CD8-positive, alpha-beta T cell (primary cell): ENCODE measurements at regions of chr19 and their contacts with region 1.

Region 1: DNA sequence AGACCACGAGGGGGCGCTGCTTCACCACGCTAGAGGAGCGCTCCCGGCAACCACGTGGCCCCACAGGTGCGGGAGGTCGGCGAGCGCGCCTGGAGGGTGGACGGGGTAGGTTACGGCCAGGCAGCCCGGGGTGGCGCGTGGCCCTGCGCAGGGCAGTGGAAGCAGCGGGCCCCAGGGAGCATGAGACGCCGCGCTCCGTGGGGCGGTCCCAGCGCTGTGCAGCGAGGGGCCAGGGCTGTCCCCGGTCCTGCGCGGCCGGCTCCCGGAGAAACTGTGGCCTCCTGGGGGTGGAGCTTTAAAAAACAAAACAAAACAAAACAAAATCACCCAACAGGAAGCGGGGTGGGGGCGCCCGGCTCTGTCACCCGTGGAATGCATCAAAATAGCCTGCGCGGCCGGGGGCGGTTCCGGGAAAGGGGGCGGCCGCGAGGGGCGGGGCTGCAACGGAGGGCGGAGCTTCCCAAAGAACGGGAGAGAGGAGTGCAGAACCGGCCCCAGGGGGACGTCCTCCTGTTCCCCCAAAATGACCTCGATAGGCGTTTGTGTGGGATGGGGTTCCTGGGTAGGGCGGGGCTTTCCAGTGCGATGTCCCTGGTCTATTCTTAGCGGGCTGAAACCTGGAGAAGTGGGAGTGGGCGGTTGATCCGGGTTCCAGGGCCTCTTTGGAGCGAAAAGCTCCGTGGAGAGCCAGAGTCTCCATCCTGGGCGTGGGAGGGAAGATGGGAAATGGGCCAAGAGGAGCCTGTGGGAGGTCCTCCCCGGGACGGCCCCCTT is 27.3 kb downstream of the NUMBL start:
- DNase-seq: peak; percentile 86 to 98 (median 94)
- ATAC-seq: peak; percentile 82
- H3K4me3 ChIP-seq: peak overlapping the region; percentile 66 to 67
- H3K4me3 Mint-ChIP-seq: peak overlapping the region; percentile 87
- H3K27ac ChIP-seq: peak overlapping the region; percentile 49 to 70
- H3K27ac Mint-ChIP-seq: peak overlapping the region; percentile 80
- H3K4me1 ChIP-seq: peaks cover 11% of the 10 kb centered on the region
- H3K4me1 Mint-ChIP-seq: peaks cover 8% of the 10 kb centered on the region
- H3K27me3 ChIP-seq: no peaks in the 10 kb centered on the region
- H3K27me3 Mint-ChIP-seq: no peaks in the 10 kb centered on the region
- CTCF ChIP-seq: peak; percentile 95

Region 2: GRCh38 chr19:40690693-40691420 is 27.7 kb after region 1 on chr19:
- CTCF ChIA-PET with region 1: interaction called, 3 read pairs
- POLR2A ChIA-PET with region 1: interaction called, 3 read pairs
- intact Hi-C with region 1: loop called (anchors 1 to 2 kb)
- DNase-seq: peak; percentile 67 to 93 (median 85)
- ATAC-seq: peak; percentile 88
- H3K4me3 ChIP-seq: peak overlapping the region; percentile 65 to 76
- H3K4me3 Mint-ChIP-seq: peak overlapping the region; percentile 88
- H3K27ac ChIP-seq: peak overlapping the region in 1 of 2 experiments; percentile 40
- H3K27ac Mint-ChIP-seq: peak overlapping the region; percentile 75
- H3K4me1 ChIP-seq: peaks cover 23% of the 10 kb centered on the region
- H3K4me1 Mint-ChIP-seq: peaks cover 7% of the 10 kb centered on the region
- H3K27me3 ChIP-seq: peaks cover 0 to 3% of the 10 kb centered on the region in 2 experiments
- H3K27me3 Mint-ChIP-seq: no peaks in the 10 kb centered on the region
- CTCF ChIP-seq: no peak

Region 3: DNA sequence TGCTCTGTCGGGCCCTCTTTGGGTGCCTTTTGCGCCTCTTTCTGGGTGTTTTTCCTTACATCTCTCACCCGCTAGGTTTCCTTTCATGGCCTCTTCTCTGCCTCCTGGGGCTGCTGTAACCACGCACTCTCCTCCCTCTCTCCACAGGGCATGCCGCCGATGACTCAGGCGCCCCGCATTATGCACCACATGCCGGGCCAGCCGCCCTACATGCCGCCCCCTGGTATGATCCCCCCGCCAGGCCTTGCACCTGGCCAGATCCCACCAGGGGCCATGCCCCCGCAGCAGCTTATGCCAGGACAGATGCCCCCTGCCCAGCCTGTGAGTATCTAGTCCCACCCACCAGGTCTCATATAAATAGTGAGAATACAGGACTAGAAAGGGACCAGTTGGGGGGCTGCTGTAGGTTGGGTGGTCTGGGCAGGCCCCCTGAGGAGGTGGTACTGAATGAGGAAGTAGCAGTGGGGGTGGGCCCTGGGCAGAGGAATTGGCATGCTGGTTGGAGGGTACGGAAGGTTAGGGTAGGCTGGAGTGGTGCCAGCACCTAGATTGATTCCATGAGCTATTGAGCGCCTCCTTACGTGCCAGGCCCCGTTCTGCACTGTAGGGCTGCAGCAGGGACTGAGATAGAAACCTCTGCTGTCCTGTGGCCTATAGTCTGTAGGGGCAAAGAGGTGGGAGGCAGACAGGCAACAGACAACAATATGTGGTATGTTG is 99.8 kb after region 1 on chr19:
- CTCF ChIA-PET with region 1: no interaction called
- POLR2A ChIA-PET with region 1: interaction called, 3 read pairs
- intact Hi-C with region 1: loop called in 1 of 2 experiments (anchors 5 kb)
- DNase-seq: peak in 3 of 9 experiments; percentile 24 to 51 (median 37)
- ATAC-seq: peak; percentile 61
- H3K4me3 ChIP-seq: no peak overlapping the region
- H3K4me3 Mint-ChIP-seq: peak overlapping the region; percentile 11
- H3K27ac ChIP-seq: peak overlapping the region; percentile 1 to 55
- H3K27ac Mint-ChIP-seq: peak overlapping the region; percentile 91
- H3K4me1 ChIP-seq: peaks cover 41% of the 10 kb centered on the region
- H3K4me1 Mint-ChIP-seq: peaks cover 58% of the 10 kb centered on the region
- H3K27me3 ChIP-seq: no peaks in the 10 kb centered on the region
- H3K27me3 Mint-ChIP-seq: no peaks in the 10 kb centered on the region
- CTCF ChIP-seq: no peak

Region 4: GRCh38 chr19:40813182-40813958 is 150.3 kb after region 1 on chr19:
- CTCF ChIA-PET with region 1: interaction called, 43 read pairs
- POLR2A ChIA-PET with region 1: interaction called, 3 read pairs
- intact Hi-C with region 1: no loop called
- DNase-seq: no peak
- ATAC-seq: no peak
- H3K4me3 ChIP-seq: no peak overlapping the region
- H3K4me3 Mint-ChIP-seq: no peak overlapping the region
- H3K27ac ChIP-seq: no peak overlapping the region
- H3K27ac Mint-ChIP-seq: peak overlapping the region; percentile 49
- H3K4me1 ChIP-seq: peaks cover 35% of the 10 kb centered on the region
- H3K4me1 Mint-ChIP-seq: peaks cover 38% of the 10 kb centered on the region
- H3K27me3 ChIP-seq: no peaks in the 10 kb centered on the region
- H3K27me3 Mint-ChIP-seq: no peaks in the 10 kb centered on the region
- CTCF ChIP-seq: no peak

Region 5: DNA sequence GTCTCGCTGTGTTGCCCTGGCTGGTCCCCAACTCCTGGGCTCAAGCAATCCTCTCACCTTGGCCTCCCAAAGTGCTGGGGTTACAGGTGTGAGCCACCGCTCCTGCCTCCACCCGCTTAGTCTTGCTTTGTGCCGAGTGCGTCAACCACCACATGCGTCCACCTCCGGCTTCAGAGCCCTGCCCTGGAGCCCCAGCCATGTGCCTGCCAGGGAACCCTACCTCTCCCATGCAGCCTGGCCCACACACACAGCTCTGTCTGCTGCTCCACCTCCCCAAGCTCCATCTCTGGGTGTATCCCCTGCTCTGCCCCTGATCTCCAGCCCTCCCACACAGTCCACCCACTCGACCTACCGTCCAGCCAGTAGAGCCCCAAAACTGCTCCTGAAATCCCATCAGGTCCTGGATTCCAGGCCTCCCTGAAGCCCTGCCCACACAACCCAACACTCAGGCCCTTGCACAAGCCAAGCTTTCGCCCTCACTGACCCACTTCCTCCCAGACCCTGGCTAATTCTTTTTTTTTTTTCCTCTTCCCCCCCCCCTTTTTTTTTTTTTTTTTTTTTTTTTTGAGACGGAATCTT is 460.7 kb after region 1 on chr19:
- CTCF ChIA-PET with region 1: interaction called, 3 read pairs
- POLR2A ChIA-PET with region 1: no interaction called
- intact Hi-C with region 1: loop called in 1 of 2 experiments (anchors 2 kb)
- DNase-seq: peak in 1 of 9 experiments; percentile 20
- ATAC-seq: no peak
- H3K4me3 ChIP-seq: no peak overlapping the region
- H3K4me3 Mint-ChIP-seq: no peak overlapping the region
- H3K27ac ChIP-seq: no peak overlapping the region
- H3K27ac Mint-ChIP-seq: peak overlapping the region; percentile 41
- H3K4me1 ChIP-seq: peaks cover 23% of the 10 kb centered on the region
- H3K4me1 Mint-ChIP-seq: peaks cover 44% of the 10 kb centered on the region
- H3K27me3 ChIP-seq: no peaks in the 10 kb centered on the region
- H3K27me3 Mint-ChIP-seq: no peaks in the 10 kb centered on the region
- CTCF ChIP-seq: no peak

Region 6: DNA sequence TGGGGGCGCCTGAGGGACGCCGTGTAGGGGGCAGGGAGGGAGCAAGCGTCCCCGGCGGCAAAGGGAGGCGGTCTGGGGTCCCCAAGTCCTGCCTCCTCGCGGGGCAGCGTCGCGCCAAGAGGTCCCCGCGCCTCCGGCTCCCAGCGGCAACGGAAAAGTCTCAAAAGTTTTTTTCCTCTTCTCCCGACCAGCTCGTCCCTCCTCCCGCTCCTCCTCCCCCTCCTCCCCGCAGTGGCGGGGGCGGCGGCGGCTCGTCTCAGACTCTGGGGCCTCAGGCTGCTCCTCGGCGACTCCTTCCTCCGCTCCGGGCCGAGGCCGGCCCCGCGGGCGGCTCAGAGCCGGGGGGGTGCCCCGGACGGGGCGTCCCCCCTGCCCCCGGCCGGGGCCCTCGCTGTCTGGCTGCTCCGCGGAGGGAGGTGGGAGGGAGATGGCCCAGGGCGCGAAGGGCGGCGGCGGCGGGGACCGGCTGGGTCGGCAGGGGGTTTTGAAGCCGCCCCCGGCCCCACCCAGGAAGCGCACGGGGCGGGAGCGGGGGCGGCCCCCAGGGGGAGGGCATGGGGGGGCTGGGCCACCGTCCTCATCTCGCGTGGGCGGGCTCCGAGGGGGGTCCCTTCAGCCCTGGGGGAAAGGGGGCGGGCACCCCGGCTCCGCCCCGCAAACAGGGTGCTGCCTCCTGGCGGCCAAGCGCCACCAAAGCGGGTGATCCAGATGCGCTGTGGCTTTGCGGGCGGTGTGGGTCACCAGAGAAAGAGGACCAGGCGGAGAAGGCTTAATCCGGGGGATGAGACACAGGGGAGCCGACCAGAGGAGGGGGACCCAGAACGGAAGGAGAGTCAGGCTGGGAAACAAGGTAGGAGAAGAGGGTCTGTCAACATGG is 690.6 kb after region 1 on chr19 and contains the start of gene TGFB1:
- CTCF ChIA-PET with region 1: no interaction called
- POLR2A ChIA-PET with region 1: no interaction called
- intact Hi-C with region 1: loop called in 1 of 2 experiments (anchors 5 kb)
- DNase-seq: peak; percentile 91 to 98 (median 96)
- ATAC-seq: peak; percentile 69
- H3K4me3 ChIP-seq: peak within 1 kb of the TSS; percentile 74 to 79
- H3K4me3 Mint-ChIP-seq: peak within 1 kb of the TSS; percentile 95
- H3K27ac ChIP-seq: peak within 1 kb of the TSS; percentile 76 to 82
- H3K27ac Mint-ChIP-seq: peak within 1 kb of the TSS; percentile 96
- H3K4me1 ChIP-seq: peaks cover 69% of the 10 kb centered on the region
- H3K4me1 Mint-ChIP-seq: peaks cover 60% of the 10 kb centered on the region
- H3K27me3 ChIP-seq: no peaks in the 10 kb centered on the region
- H3K27me3 Mint-ChIP-seq: no peaks in the 10 kb centered on the region
- CTCF ChIP-seq: peak; percentile 85
- total RNA-seq, gene TGFB1: 652 to 710 TPM